ENCODE measurements at regions of chr4 and their contacts with region 1.

Region 1: GRCh38 chr4:38179690-38180377 is 219.6 kb downstream of the PTTG2 start:
- DNase-seq: peak; percentile 68 to 93 (median 81)
- H3K4me3 ChIP-seq: no peak overlapping the region
- H3K27ac ChIP-seq: no peak overlapping the region
- H3K4me1 ChIP-seq: no peaks in the 10 kb centered on the region
- H3K27me3 ChIP-seq: no peaks in the 10 kb centered on the region
- CTCF ChIP-seq: peak; percentile 77 to 96 (median 92)
- POLR2A ChIP-seq: no peak

Region 2: GRCh38 chr4:37936889-37937498 is 242.8 kb before region 1 on chr4:
- intact Hi-C with region 1: no loop called
- DNase-seq: peak; percentile 39 to 75 (median 65)
- H3K4me3 ChIP-seq: no peak overlapping the region
- H3K27ac ChIP-seq: no peak overlapping the region
- H3K4me1 ChIP-seq: peaks cover 0 to 4% of the 10 kb centered on the region in 2 donors
- H3K27me3 ChIP-seq: no peaks in the 10 kb centered on the region
- CTCF ChIP-seq: no peak
- POLR2A ChIP-seq: no peak

Region 3: DNA sequence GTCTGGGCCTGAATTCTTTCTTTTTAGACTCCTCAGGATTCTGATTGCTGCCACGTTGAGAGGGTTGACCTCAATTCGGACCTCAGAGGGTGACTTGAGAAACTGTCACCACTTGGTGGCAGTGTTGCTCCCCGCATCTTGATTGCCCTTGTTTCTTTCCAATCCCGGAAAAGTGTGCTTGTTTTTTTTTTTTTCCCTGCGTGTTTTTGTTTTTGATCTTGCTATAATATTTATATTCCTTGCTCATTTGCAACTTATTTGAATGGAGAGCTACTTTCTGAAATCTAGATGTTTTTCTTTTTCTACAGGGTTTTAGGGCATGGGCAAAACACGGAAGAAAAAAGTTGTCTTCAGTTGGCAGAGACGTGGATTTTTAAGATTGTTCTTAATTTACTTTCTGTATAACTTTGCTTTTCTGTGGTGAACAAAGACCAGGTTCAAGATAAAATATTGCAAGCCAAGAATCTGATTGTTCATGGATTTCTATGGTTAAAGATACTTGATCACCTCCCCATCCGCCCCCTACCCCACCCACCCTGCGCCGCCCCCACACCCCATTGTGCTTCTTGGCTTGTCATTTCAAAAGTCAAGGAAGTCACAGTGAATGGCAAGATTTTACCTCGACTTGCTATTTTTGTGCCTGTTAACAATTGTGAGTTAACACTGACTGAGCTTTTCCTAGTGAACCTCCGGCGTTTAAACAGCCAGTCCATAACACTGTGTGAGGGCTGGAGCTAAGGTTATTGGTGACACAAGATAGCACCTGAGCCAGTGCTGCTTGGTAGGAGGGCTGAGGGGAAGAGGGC is 117.5 kb before region 1 on chr4:
- intact Hi-C with region 1: loop called (anchors 5 kb)
- DNase-seq: peak; percentile 69 to 95 (median 85)
- H3K4me3 ChIP-seq: peak overlapping the region in 2 of 4 donors; percentile 5 to 51
- H3K27ac ChIP-seq: peak overlapping the region in 1 of 5 donors; percentile 17
- H3K4me1 ChIP-seq: peaks cover 0 to 4% of the 10 kb centered on the region in 2 donors
- H3K27me3 ChIP-seq: no peaks in the 10 kb centered on the region
- CTCF ChIP-seq: peak; percentile 72 to 94 (median 84)
- POLR2A ChIP-seq: no peak

Region 4: GRCh38 chr4:38069271-38069760 is 110.5 kb before region 1 on chr4:
- intact Hi-C with region 1: loop called (anchors 5 kb)
- DNase-seq: peak; percentile 44 to 85 (median 75)
- H3K4me3 ChIP-seq: no peak overlapping the region
- H3K27ac ChIP-seq: peak overlapping the region in 3 of 5 donors; percentile 24 to 55 (median 35)
- H3K4me1 ChIP-seq: peaks cover 0 to 23% of the 10 kb centered on the region in 2 donors
- H3K27me3 ChIP-seq: no peaks in the 10 kb centered on the region
- CTCF ChIP-seq: peak; percentile 18 to 62 (median 52)
- POLR2A ChIP-seq: peak in 1 of 2 donors; percentile 52

Region 5: DNA sequence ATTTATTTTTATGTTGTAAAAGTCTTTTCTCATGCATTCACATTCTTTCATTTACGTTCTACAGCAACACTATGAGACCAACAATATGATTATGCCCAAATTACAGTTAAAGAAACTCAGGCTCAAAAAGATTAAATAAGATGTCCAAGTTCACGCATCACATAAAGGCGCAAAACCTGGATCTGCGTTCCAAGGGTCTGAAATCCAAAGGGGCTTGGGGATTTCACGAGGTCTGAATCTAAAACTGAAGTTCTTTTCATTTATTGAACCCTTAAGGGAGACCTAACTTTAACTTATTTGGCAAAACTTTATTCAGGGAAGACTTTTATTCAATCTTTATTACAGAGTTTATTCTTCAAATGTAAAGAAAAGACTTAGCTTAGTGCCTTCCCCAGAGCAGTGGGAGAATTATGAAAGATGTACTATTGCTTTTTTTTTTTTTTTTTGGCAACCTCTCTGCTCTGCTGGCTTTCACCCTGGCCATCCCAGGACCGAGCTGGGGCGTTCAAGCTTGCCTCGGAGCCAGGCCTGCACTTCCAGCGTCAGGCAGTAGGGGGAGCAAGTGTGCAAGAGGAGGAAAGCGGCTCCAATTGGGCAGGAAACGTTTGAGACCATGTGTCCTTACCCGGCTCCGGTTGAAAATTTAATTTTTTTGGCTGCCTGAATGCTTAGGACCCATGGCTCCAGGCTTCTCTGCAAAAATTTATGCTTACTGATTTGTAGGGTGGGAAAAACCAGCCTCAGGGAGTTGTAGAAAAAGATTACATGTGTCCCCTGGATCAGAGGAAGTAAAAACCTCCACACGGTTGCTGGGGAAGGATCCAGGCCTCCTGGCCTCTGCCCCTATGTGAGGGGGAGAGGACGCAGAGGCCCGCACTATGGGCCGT is 139.9 kb after region 1 on chr4:
- intact Hi-C with region 1: loop called (anchors 5 to 10 kb)
- DNase-seq: peak; percentile 93 to 98 (median 95)
- H3K4me3 ChIP-seq: peak overlapping the region in 2 of 4 donors; percentile 7 to 44
- H3K27ac ChIP-seq: peak overlapping the region; percentile 70 to 88 (median 80)
- H3K4me1 ChIP-seq: peaks cover 10 to 25% of the 10 kb centered on the region in 2 donors
- H3K27me3 ChIP-seq: no peaks in the 10 kb centered on the region
- CTCF ChIP-seq: peak; percentile 97 to 99 (median 98)
- POLR2A ChIP-seq: no peak

Region 6: DNA sequence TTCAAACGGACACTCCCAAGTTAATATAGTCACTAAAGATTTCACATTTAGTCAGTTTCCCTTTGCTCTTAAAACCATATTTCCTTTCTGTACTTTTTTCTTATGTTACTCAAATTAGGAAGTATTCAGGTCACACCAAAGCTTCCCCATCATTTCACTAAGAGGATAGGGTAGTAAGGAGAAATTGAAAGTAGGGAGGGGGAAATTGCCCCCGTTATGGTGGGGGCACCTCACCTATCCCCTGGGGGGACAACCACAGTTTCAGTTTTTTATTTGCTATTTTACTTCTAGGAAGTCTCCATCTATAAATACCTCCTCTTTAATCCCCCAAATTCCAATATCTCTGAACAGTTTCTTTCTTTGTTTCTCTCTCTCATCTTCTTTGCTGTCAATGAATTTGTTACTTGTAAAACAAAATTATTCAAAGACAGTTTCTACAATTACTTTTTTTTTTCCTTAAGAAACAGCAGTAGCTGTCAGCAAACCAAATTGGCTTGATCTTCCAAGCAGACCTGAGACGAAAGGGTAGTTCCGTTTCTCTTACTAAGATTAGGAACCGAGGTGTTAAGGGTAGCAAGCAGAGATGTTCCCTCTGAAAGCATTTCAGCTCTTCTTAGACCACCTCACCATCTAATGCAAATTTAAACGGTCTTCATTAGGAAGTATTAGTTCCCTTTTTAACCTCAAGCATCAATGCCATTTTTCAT is 324.0 kb after region 1 on chr4:
- intact Hi-C with region 1: no loop called
- DNase-seq: no peak
- H3K4me3 ChIP-seq: no peak overlapping the region
- H3K27ac ChIP-seq: no peak overlapping the region
- H3K4me1 ChIP-seq: no peaks in the 10 kb centered on the region
- H3K27me3 ChIP-seq: no peaks in the 10 kb centered on the region
- CTCF ChIP-seq: no peak
- POLR2A ChIP-seq: no peak

Region 7: DNA sequence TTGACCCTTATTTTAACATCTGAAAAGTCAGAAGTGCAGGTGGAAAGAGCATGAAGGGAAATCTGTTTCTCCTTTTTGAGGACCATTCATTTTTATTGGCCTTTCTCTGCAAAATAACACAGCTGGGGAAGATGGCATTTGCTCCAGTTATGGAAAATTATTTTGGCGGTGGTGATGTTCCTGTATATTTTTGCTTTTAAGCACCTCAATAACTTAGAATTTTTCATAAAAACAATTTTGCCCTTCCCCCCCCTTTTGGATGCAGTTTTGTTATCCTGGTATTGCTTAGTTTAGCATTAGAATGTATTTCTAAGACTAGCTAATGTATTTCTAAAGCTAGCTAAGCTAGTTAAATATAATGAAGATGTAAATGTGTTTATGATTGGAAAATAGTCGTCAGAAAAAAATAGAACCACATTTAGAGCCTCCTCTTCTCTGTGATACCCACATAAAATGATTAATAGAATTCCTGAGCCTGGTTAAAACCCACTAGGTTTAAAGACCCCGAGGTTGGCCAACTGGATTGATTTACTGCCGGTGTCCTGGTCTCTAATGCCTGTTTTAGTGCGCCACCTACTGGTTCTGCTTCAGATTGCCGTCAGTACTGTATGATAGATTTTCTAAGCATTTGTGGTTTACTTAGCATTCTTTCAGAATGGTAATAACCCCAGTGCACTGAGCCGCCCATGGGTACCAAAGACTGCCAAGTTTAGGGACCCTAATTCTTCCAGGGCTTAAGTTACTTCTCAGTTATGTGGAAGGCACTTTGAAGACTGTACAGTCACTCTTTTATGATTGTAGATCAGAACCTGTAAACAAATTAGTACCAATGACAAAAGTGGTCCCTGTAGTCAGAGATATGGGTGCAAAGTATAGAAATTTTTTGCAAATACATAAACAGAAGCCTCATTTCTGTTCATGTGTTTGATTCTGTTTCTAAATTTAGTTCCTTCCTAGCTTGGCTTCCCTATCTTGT is 495.6 kb after region 1 on chr4:
- intact Hi-C with region 1: loop called (anchors 5 kb)
- DNase-seq: peak; percentile 63 to 95 (median 83)
- H3K4me3 ChIP-seq: no peak overlapping the region
- H3K27ac ChIP-seq: peak overlapping the region; percentile 23 to 99 (median 87)
- H3K4me1 ChIP-seq: peaks cover 53 to 70% of the 10 kb centered on the region in 2 donors
- H3K27me3 ChIP-seq: no peaks in the 10 kb centered on the region
- CTCF ChIP-seq: peak; percentile 83 to 95 (median 90)
- POLR2A ChIP-seq: no peak

Region 8: DNA sequence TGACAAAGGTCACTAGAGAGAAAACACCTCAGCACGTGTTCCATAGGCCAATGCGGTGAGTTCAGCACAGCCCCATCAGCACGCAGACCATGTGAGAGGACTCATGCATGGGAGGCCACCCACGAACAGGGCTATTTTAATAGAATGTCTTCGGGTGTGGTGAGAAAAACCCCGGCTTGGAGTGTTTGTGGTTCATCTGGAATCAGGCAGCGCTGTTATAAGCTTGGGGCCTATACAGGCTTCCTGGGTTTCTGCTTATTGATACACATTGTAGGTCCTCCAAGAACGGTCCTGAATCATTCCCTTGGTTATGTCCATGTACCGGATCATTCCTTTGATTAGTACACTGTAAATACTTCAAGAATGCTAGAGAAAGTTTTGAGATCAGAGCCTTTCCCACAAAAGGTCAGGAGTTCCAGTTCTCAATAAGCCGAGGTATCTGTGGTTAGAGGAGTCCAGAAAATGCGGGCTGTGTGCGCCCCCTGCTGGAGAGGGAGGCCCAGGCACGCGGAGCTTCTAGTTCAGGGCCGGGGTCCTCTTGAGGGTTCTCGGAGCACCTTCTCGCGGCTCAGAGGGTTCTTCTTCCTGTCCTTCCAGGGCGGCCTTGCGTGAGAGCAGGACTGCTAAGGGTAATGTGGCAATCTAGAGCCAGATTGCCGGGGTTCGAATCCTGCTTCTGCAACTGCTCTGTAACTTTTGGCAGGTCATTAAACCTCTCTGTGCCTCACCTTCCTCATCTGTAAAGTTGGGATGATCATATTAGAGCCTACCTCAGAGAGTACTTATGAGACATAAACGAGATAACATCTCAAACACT is 551.2 kb after region 1 on chr4:
- intact Hi-C with region 1: loop called (anchors 2 to 5 kb)
- DNase-seq: peak; percentile 70 to 93 (median 84)
- H3K4me3 ChIP-seq: no peak overlapping the region
- H3K27ac ChIP-seq: no peak overlapping the region
- H3K4me1 ChIP-seq: no peaks in the 10 kb centered on the region
- H3K27me3 ChIP-seq: no peaks in the 10 kb centered on the region
- CTCF ChIP-seq: peak in 5 of 6 experiments; percentile 87 to 96 (median 96)
- POLR2A ChIP-seq: no peak

Measured in adrenal gland (tissue), 19 donors.